CD14-positive monocyte (primary cell): ENCODE measurements at regions of chr2 and their contacts with region 1.

Region 1: GRCh38 chr2:203909261-203909967 is 27.1 kb upstream of the ICOS start:
- DNase-seq: peak; percentile 67 to 85 (median 78)
- H3K4me3 ChIP-seq: peak overlapping the region; percentile 19 to 68 (median 49)
- H3K4me3 Mint-ChIP-seq: peak overlapping the region; percentile 37 to 90
- H3K27ac ChIP-seq: peak overlapping the region in 1 of 2 donors; percentile 85
- H3K27ac Mint-ChIP-seq: peak overlapping the region; percentile 84 to 95 (median 90)
- H3K4me1 ChIP-seq: peaks cover 32 to 39% of the 10 kb centered on the region in 2 donors
- H3K4me1 Mint-ChIP-seq: peaks cover 32% of the 10 kb centered on the region
- H3K27me3 ChIP-seq: no peaks in the 10 kb centered on the region
- H3K27me3 Mint-ChIP-seq: peaks cover 0 to 2% (median 0%) of the 10 kb centered on the region in 3 donors
- CTCF ChIP-seq: peak; percentile 92

Region 2: GRCh38 chr2:203484266-203485112 is 424.9 kb before region 1 on chr2:
- intact Hi-C with region 1: loop called in 1 of 2 experiments (anchors 5 kb)
- DNase-seq: peak; percentile 41 to 68 (median 63)
- H3K4me3 ChIP-seq: no peak overlapping the region
- H3K4me3 Mint-ChIP-seq: no peak overlapping the region
- H3K27ac ChIP-seq: no peak overlapping the region
- H3K27ac Mint-ChIP-seq: peak overlapping the region in 1 of 7 donors; percentile 14
- H3K4me1 ChIP-seq: no peaks in the 10 kb centered on the region
- H3K4me1 Mint-ChIP-seq: peaks cover 2% of the 10 kb centered on the region
- H3K27me3 ChIP-seq: no peaks in the 10 kb centered on the region
- H3K27me3 Mint-ChIP-seq: peaks cover 0 to 1% (median 1%) of the 10 kb centered on the region in 3 donors
- CTCF ChIP-seq: peak; percentile 82

Region 3: DNA sequence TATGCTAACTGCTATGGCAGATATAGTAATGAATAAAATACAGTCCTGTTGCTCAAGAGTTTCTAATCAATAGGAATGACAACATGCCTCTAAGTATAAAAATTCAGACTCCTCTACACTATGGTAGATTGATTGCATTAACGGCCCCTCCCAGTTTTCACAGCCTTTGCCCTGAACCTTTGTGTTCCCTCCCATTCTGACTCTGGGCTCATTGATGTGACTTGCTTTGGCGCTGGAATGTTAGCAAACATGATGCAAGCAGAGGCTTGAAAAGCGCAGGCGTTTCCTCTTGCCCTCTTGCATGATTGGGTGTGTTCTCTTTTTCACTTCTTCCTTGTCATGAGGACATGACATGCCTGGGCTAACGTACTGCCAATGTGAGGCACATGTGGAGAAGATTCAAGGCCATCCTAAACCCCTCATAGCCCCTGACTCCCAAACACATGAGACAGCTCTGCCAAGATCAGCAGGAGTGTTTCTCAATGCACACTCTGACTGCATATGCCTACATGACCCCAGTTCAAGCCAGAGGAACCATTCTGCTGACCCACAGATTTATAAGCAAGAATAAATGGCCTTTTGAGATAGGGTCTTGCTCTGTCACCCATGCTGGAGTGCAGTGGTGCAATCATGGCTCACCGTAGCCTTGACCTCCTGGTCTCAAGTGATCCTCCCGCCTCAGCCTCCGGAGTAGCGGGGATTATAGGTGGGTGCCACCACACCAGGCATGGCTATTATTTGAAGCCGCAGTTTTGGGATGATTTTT is 252.7 kb before region 1 on chr2:
- intact Hi-C with region 1: loop called in 1 of 2 experiments (anchors 5 kb)
- DNase-seq: peak; percentile 90 to 94 (median 94)
- H3K4me3 ChIP-seq: no peak overlapping the region
- H3K4me3 Mint-ChIP-seq: no peak overlapping the region
- H3K27ac ChIP-seq: peak overlapping the region; percentile 75 to 78
- H3K27ac Mint-ChIP-seq: peak overlapping the region; percentile 88 to 96 (median 95)
- H3K4me1 ChIP-seq: peaks cover 54 to 59% of the 10 kb centered on the region in 2 donors
- H3K4me1 Mint-ChIP-seq: peaks cover 60% of the 10 kb centered on the region
- H3K27me3 ChIP-seq: no peaks in the 10 kb centered on the region
- H3K27me3 Mint-ChIP-seq: peaks cover 0 to 5% (median 4%) of the 10 kb centered on the region in 3 donors
- CTCF ChIP-seq: no peak

Region 4: GRCh38 chr2:203814661-203815540 is 94.5 kb before region 1 on chr2:
- intact Hi-C with region 1: loop called (anchors 5 to 10 kb)
- DNase-seq: peak; percentile 79 to 90 (median 84)
- H3K4me3 ChIP-seq: peak overlapping the region in 1 of 3 experiments; percentile 26
- H3K4me3 Mint-ChIP-seq: peak overlapping the region; percentile 45 to 67
- H3K27ac ChIP-seq: no peak overlapping the region
- H3K27ac Mint-ChIP-seq: peak overlapping the region; percentile 18 to 74 (median 73)
- H3K4me1 ChIP-seq: peaks cover 57 to 69% of the 10 kb centered on the region in 2 donors
- H3K4me1 Mint-ChIP-seq: peaks cover 69% of the 10 kb centered on the region
- H3K27me3 ChIP-seq: no peaks in the 10 kb centered on the region
- H3K27me3 Mint-ChIP-seq: peaks cover 0 to 9% (median 4%) of the 10 kb centered on the region in 3 donors
- CTCF ChIP-seq: peak; percentile 83

Region 5: DNA sequence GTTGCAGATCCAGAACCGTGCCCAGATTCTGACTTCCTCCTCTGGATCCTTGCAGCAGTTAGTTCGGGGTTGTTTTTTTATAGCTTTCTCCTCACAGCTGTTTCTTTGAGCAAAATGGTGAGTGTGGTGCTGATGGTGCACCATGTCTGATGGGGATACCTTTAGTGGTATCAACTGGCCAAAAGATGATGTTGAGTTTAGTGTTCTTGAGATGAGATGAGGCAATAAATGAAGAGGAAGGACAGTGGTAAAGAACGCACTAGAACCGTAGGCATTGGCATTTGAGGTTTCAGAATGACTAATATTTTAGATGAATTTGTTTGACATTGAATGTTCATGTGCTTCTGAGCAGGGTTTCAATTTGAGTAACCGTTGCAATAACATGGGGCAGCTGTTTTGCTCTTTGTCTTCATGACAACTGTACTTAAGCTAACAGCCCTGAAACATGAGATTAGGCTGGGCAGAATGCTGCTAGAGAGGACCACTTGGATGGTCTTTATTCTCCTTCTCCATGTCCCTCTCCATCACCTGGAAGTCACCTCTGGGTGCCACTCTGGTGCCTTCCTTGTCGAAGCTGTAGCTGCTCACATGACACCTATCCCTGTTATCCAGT is 37.9 kb before region 1 on chr2:
- intact Hi-C with region 1: loop called in 1 of 2 experiments (anchors 5 kb)
- DNase-seq: peak; percentile 68 to 80 (median 77)
- H3K4me3 ChIP-seq: peak overlapping the region in 1 of 3 experiments; percentile 12
- H3K4me3 Mint-ChIP-seq: peak overlapping the region; percentile 45 to 47
- H3K27ac ChIP-seq: peak overlapping the region; percentile 77 to 79
- H3K27ac Mint-ChIP-seq: peak overlapping the region; percentile 82 to 95 (median 90)
- H3K4me1 ChIP-seq: peaks cover 28 to 32% of the 10 kb centered on the region in 2 donors
- H3K4me1 Mint-ChIP-seq: peaks cover 33% of the 10 kb centered on the region
- H3K27me3 ChIP-seq: no peaks in the 10 kb centered on the region
- H3K27me3 Mint-ChIP-seq: peaks cover 1 to 4% (median 4%) of the 10 kb centered on the region in 3 donors
- CTCF ChIP-seq: no peak

Region 6: GRCh38 chr2:203936535-203936934 is 27.1 kb after region 1 on chr2 and contains the start of gene ICOS:
- intact Hi-C with region 1: no loop called
- DNase-seq: no peak
- H3K4me3 ChIP-seq: no peak within 1 kb of the TSS
- H3K4me3 Mint-ChIP-seq: no peak within 1 kb of the TSS
- H3K27ac ChIP-seq: no peak within 1 kb of the TSS
- H3K27ac Mint-ChIP-seq: no peak within 1 kb of the TSS
- H3K4me1 ChIP-seq: no peaks in the 10 kb centered on the region
- H3K4me1 Mint-ChIP-seq: no peaks in the 10 kb centered on the region
- H3K27me3 ChIP-seq: no peaks in the 10 kb centered on the region
- H3K27me3 Mint-ChIP-seq: peaks cover 2 to 4% (median 3%) of the 10 kb centered on the region in 3 donors
- CTCF ChIP-seq: no peak
- polyA plus RNA-seq, gene ICOS: 0.03 to 0.13 TPM in 2 of 3 donors, not detected in the other

Region 7: DNA sequence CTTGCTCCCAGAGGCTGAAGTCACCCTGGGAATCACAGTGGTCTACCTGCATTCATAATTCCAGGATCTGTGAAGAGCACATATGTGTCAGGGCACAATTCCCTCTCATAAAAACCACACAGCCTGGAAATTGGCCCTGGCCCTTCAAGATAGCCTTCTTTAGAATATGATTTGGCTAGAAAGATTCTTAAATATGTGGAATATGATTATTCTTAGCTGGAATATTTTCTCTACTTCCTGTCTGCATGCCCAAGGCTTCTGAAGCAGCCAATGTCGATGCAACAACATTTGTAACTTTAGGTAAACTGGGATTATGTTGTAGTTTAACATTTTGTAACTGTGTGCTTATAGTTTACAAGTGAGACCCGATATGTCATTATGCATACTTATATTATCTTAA is 51.4 kb after region 1 on chr2:
- intact Hi-C with region 1: no loop called
- DNase-seq: no peak
- H3K4me3 ChIP-seq: no peak overlapping the region
- H3K4me3 Mint-ChIP-seq: no peak overlapping the region
- H3K27ac ChIP-seq: no peak overlapping the region
- H3K27ac Mint-ChIP-seq: no peak overlapping the region
- H3K4me1 ChIP-seq: no peaks in the 10 kb centered on the region
- H3K4me1 Mint-ChIP-seq: no peaks in the 10 kb centered on the region
- H3K27me3 ChIP-seq: no peaks in the 10 kb centered on the region
- H3K27me3 Mint-ChIP-seq: peaks cover 0 to 8% (median 3%) of the 10 kb centered on the region in 3 donors
- CTCF ChIP-seq: no peak

Region 8: DNA sequence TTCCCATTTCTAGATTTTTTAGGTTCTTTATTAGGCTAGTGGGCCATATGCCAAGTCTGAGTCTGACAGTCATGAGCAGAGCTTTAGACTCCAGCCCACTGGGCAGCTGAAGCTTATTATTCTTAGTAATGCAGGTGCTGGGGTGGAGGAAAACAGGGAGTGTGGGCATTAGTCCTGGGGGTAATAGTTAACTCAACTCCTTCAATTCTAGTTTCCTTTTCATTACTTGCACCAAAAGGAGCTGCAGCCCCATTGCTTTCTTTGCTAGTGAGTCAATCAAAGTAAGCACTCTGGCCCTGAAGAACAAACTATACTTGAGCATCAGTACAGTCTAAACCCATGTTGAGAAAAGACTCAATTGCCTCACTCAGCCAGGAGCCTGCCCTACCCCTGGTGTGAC is 62.7 kb after region 1 on chr2:
- intact Hi-C with region 1: no loop called
- DNase-seq: no peak
- H3K4me3 ChIP-seq: no peak overlapping the region
- H3K4me3 Mint-ChIP-seq: no peak overlapping the region
- H3K27ac ChIP-seq: no peak overlapping the region
- H3K27ac Mint-ChIP-seq: no peak overlapping the region
- H3K4me1 ChIP-seq: no peaks in the 10 kb centered on the region
- H3K4me1 Mint-ChIP-seq: no peaks in the 10 kb centered on the region
- H3K27me3 ChIP-seq: no peaks in the 10 kb centered on the region
- H3K27me3 Mint-ChIP-seq: peaks cover 4 to 10% (median 4%) of the 10 kb centered on the region in 3 donors
- CTCF ChIP-seq: no peak

Region 9: GRCh38 chr2:204108330-204108751 is 198.9 kb after region 1 on chr2:
- intact Hi-C with region 1: no loop called
- DNase-seq: no peak
- H3K4me3 ChIP-seq: no peak overlapping the region
- H3K4me3 Mint-ChIP-seq: no peak overlapping the region
- H3K27ac ChIP-seq: no peak overlapping the region
- H3K27ac Mint-ChIP-seq: no peak overlapping the region
- H3K4me1 ChIP-seq: peaks cover 9 to 13% of the 10 kb centered on the region in 2 donors
- H3K4me1 Mint-ChIP-seq: peaks cover 23% of the 10 kb centered on the region
- H3K27me3 ChIP-seq: no peaks in the 10 kb centered on the region
- H3K27me3 Mint-ChIP-seq: peaks cover 8 to 17% (median 9%) of the 10 kb centered on the region in 3 donors
- CTCF ChIP-seq: no peak